ENCODE measurements at regions of chr1 and their contacts with region 1.

Region 1: GRCh38 chr1:212455803-212456528 is 23.2 kb downstream of the NENF start:
- DNase-seq: peak; percentile 82
- H3K4me3 ChIP-seq: no peak overlapping the region
- H3K27ac ChIP-seq: no peak overlapping the region
- H3K4me1 ChIP-seq: no peaks in the 10 kb centered on the region
- H3K27me3 ChIP-seq: peaks cover 0 to 2% of the 10 kb centered on the region in 2 experiments
- CTCF ChIP-seq: peak; percentile 91
- POLR2A ChIP-seq: no peak

Region 2: GRCh38 chr1:211680752-211681327 is 775.1 kb before region 1 on chr1:
- CTCF ChIA-PET with region 1: interaction called, 198 read pairs
- POLR2A ChIA-PET with region 1: interaction called, 4 read pairs
- dilution Hi-C with region 1: no loop called
- intact Hi-C with region 1: loop called (anchors 1 kb)
- DNase-seq: peak; percentile 86
- H3K4me3 ChIP-seq: no peak overlapping the region
- H3K27ac ChIP-seq: no peak overlapping the region
- H3K4me1 ChIP-seq: peaks cover 3% of the 10 kb centered on the region
- H3K27me3 ChIP-seq: peaks cover 0 to 2% of the 10 kb centered on the region in 2 experiments
- CTCF ChIP-seq: peak; percentile 59 to 66
- POLR2A ChIP-seq: no peak

Region 3: GRCh38 chr1:212062832-212063438 is 393.0 kb before region 1 on chr1:
- CTCF ChIA-PET with region 1: interaction called, 55 read pairs
- POLR2A ChIA-PET with region 1: no interaction called
- dilution Hi-C with region 1: no loop called
- intact Hi-C with region 1: loop called (anchors 1 kb)
- DNase-seq: peak; percentile 57
- H3K4me3 ChIP-seq: no peak overlapping the region
- H3K27ac ChIP-seq: no peak overlapping the region
- H3K4me1 ChIP-seq: peaks cover 13% of the 10 kb centered on the region
- H3K27me3 ChIP-seq: no peaks in the 10 kb centered on the region
- CTCF ChIP-seq: peak; percentile 42 to 45
- POLR2A ChIP-seq: no peak

Region 4: GRCh38 chr1:212205843-212206242 is 250.1 kb before region 1 on chr1:
- CTCF ChIA-PET with region 1: no interaction called
- POLR2A ChIA-PET with region 1: no interaction called
- dilution Hi-C with region 1: no loop called
- intact Hi-C with region 1: no loop called
- DNase-seq: no peak
- H3K4me3 ChIP-seq: no peak overlapping the region
- H3K27ac ChIP-seq: no peak overlapping the region
- H3K4me1 ChIP-seq: peaks cover 8% of the 10 kb centered on the region
- H3K27me3 ChIP-seq: peaks cover 0 to 3% of the 10 kb centered on the region in 2 experiments
- CTCF ChIP-seq: no peak
- POLR2A ChIP-seq: no peak

Region 5: DNA sequence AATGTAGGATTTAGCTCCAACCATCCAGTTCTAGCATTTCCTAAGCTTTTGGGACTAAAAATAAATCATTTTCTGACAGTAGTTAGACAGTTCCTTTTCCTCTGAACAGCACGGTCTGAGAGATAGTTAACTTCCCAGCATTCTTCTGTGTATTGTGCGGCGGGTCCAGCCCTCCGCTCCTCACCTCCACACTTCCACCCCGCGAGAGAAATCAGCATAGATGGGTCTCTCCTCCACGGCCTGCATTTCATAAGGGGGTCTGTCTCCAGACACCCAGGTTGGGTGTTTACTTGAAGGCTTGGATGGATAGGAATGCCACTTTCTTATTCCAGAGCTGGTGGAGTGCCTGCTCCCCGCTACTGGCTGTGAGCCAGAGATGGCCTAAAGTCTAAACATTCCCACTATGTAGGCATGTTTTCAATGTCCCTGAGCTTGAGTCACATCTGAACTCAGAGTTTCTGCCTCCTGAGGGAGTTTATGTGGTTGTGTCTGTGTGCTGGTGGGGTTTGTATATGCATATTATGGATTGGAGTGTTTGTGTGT is 208.7 kb before region 1 on chr1:
- CTCF ChIA-PET with region 1: no interaction called
- POLR2A ChIA-PET with region 1: no interaction called
- dilution Hi-C with region 1: no loop called
- intact Hi-C with region 1: no loop called
- DNase-seq: peak; percentile 67
- H3K4me3 ChIP-seq: no peak overlapping the region
- H3K27ac ChIP-seq: no peak overlapping the region
- H3K4me1 ChIP-seq: peaks cover 9% of the 10 kb centered on the region
- H3K27me3 ChIP-seq: peaks cover 0 to 2% of the 10 kb centered on the region in 2 experiments
- CTCF ChIP-seq: no peak
- POLR2A ChIP-seq: no peak

Region 6: DNA sequence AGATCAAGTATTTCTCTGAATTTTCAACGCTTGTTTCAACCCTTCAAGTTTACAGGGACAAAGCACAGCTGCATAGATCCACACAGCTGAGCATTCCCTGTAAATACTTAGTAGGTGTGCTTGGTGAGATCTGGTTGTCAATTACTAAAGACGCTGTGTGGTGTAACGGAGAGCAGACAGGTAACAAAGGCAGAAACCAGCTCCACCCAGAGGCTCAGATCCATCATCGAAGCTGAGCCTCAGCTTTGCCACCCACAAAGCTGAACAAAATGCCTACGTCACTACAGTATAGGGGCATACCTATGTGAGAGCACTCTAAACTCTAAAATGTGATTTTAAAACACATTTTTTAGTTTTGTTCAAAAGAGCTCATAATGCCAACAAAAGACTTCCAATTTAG is 80.0 kb before region 1 on chr1:
- CTCF ChIA-PET with region 1: interaction called, 15 read pairs
- POLR2A ChIA-PET with region 1: no interaction called
- dilution Hi-C with region 1: no loop called
- intact Hi-C with region 1: no loop called
- DNase-seq: no peak
- H3K4me3 ChIP-seq: no peak overlapping the region
- H3K27ac ChIP-seq: no peak overlapping the region
- H3K4me1 ChIP-seq: no peaks in the 10 kb centered on the region
- H3K27me3 ChIP-seq: no peaks in the 10 kb centered on the region
- CTCF ChIP-seq: no peak
- POLR2A ChIP-seq: no peak

Region 7: GRCh38 chr1:212466898-212467642 is 11.1 kb after region 1 on chr1:
- CTCF ChIA-PET with region 1: interaction called, 45 read pairs
- POLR2A ChIA-PET with region 1: no interaction called
- dilution Hi-C with region 1: no loop called
- intact Hi-C with region 1: no loop called
- DNase-seq: no peak
- H3K4me3 ChIP-seq: no peak overlapping the region
- H3K27ac ChIP-seq: no peak overlapping the region
- H3K4me1 ChIP-seq: no peaks in the 10 kb centered on the region
- H3K27me3 ChIP-seq: peaks cover 0 to 4% of the 10 kb centered on the region in 2 experiments
- CTCF ChIP-seq: no peak
- POLR2A ChIP-seq: no peak

Region 8: DNA sequence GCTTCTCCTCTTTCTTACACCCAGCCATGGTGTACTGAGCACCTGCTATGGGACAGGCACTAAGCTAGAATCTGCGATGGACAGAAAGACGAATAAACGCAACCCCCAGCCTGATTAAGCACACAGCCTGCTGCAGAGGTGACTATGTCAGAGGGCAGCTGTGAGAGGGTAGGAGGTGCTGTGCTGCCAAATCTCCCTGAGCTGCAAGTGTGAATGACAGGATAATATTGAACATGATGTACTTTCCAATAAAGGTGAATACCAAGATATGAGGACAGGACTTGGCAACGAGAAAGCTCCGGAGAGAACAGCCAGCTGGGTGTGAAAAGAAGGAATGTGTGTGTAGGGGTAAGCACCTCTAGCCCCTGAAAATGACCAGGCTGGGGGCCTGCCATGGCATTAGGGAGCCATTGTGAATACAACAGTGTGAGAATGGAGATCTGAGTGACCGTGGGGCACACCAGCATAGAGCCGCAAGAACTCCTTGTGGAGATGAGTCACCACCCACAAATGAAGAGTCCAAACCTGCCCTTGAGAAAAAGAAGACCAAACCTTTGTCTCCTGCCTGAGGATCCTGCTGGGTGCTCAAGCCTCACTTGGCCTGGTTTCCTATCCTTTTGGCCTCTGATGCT is 69.6 kb after region 1 on chr1:
- CTCF ChIA-PET with region 1: no interaction called
- POLR2A ChIA-PET with region 1: no interaction called
- dilution Hi-C with region 1: no loop called
- intact Hi-C with region 1: no loop called
- DNase-seq: no peak
- H3K4me3 ChIP-seq: no peak overlapping the region
- H3K27ac ChIP-seq: no peak overlapping the region
- H3K4me1 ChIP-seq: no peaks in the 10 kb centered on the region
- H3K27me3 ChIP-seq: peaks cover 23 to 30% of the 10 kb centered on the region in 2 experiments
- CTCF ChIP-seq: no peak
- POLR2A ChIP-seq: no peak

Region 9: DNA sequence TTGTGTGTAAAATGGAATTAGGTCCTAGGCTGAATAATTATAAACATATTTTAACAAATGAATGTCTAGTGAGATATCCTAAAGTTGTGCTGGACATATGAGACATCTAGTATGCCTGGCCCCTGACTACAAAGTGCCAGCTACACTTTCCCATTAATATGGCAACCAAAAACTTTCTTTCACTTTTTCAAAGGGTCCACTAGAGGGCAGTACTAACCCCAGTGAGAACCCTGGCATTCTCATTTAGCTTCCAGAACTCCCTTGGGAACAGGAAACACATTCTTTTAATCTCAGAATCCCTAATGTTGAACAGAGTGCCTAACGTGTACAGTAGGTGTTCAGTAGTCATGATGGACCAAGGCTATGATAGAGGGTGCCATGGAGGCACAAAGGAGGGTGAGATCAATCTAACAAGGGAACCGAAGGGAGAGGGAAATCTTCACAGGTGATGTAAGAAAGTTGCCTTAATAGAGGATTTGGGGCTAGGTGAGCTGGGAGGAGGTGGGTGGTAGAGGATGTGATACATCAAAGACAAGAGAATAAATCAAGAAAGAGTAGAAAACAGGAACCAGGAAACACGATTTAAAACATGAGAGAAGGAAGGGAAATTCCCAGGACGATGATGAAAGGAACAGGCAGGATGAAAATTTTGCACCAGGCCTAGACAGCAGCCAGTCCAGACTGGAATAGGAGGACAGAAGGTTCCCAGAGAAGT is 294.0 kb after region 1 on chr1:
- CTCF ChIA-PET with region 1: interaction called, 17 read pairs
- POLR2A ChIA-PET with region 1: no interaction called
- dilution Hi-C with region 1: no loop called
- intact Hi-C with region 1: no loop called
- DNase-seq: peak; percentile 67
- H3K4me3 ChIP-seq: no peak overlapping the region
- H3K27ac ChIP-seq: peak overlapping the region; percentile 13
- H3K4me1 ChIP-seq: no peaks in the 10 kb centered on the region
- H3K27me3 ChIP-seq: no peaks in the 10 kb centered on the region
- CTCF ChIP-seq: peak; percentile 68 to 79
- POLR2A ChIP-seq: no peak

Region 10: GRCh38 chr1:212791676-212792395 is 335.9 kb after region 1 on chr1 and contains the starts of genes NSL1 and TATDN3:
- CTCF ChIA-PET with region 1: no interaction called
- POLR2A ChIA-PET with region 1: no interaction called
- dilution Hi-C with region 1: no loop called
- intact Hi-C with region 1: no loop called
- DNase-seq: peak; percentile 95
- H3K4me3 ChIP-seq: peak within 1 kb of the TSS; percentile 77 to 97 (median 94)
- H3K27ac ChIP-seq: peak within 1 kb of the TSS; percentile 81
- H3K4me1 ChIP-seq: peaks cover 21% of the 10 kb centered on the region
- H3K27me3 ChIP-seq: no peaks in the 10 kb centered on the region
- CTCF ChIP-seq: no peak
- POLR2A ChIP-seq: peak; percentile 92
- total RNA-seq, gene NSL1: 27.7 and 30.2 TPM in 2 replicates
- total RNA-seq, gene TATDN3: 7.8 and 8.0 TPM in 2 replicates